Kidney (tissue), 22 donors: ENCODE measurements at regions of chr1 and their contacts with region 1.

Region 1: GRCh38 chr1:205919026-205919746 is 24.1 kb downstream of the SLC26A9 start:
- DNase-seq: peak; percentile 72 to 83 (median 81)
- H3K4me3 ChIP-seq: no peak overlapping the region
- H3K27ac ChIP-seq: no peak overlapping the region
- H3K4me1 ChIP-seq: peaks cover 0 to 21% (median 14%) of the 10 kb centered on the region in 3 donors
- H3K27me3 ChIP-seq: no peaks in the 10 kb centered on the region
- CTCF ChIP-seq: peak; percentile 97

Region 2: DNA sequence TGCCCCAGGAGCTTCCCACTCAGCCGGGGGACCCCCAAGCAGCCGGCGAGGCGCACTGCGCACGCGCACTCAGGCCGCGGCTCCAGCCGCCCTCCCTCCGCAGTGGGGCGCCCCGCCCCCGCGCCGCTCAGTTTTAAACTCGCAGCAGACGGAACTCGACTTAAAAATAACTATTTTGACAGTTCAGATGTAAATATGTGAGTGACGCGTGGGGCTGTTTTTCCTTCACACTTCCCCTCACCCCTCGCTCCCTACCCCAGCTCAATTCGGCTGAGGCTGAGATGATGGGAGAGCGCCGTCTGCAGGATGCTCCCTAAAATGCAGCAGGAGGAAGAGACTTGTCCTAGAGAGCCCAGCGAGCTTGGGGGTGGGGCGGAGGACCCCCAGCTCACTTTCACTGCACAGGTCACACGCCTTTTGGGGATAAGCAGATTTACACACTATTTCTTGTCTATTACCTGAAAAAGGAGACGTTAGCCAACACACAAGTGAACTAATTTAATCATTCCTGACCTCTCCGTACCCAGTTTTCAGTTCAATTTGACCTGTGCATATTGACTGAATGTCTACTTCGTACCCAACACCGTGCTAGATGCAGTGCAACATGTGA is 488.4 kb before region 1 on chr1:
- intact Hi-C with region 1: no loop called
- DNase-seq: peak in 4 of 5 donors; percentile 78 to 87 (median 81)
- H3K4me3 ChIP-seq: peak overlapping the region; percentile 55 to 65 (median 56)
- H3K27ac ChIP-seq: no peak overlapping the region
- H3K4me1 ChIP-seq: peaks cover 0 to 2% (median 0%) of the 10 kb centered on the region in 3 donors
- H3K27me3 ChIP-seq: no peaks in the 10 kb centered on the region
- CTCF ChIP-seq: peak; percentile 58

Region 3: DNA sequence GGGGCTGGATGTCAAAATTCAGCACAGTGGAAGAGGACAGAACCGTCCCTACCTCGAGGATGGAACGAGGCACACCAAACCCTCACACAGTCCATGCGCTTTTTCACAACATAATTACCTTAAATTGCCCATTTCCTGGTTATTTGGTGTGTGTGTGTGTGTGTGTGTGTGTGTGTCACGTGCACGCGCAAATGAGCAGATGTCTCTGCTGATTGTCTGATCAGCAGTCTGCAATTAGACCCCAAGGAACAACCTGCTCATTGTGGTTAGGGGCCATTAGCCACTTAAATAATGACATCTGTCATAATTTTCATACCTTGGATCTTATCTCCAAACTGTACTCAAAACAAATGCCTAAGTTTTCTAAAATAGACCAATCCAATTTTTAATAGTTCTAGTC is 174.8 kb after region 1 on chr1:
- intact Hi-C with region 1: no loop called
- DNase-seq: no peak
- H3K4me3 ChIP-seq: no peak overlapping the region
- H3K27ac ChIP-seq: no peak overlapping the region
- H3K4me1 ChIP-seq: no peaks in the 10 kb centered on the region
- H3K27me3 ChIP-seq: no peaks in the 10 kb centered on the region
- CTCF ChIP-seq: no peak

Region 4: DNA sequence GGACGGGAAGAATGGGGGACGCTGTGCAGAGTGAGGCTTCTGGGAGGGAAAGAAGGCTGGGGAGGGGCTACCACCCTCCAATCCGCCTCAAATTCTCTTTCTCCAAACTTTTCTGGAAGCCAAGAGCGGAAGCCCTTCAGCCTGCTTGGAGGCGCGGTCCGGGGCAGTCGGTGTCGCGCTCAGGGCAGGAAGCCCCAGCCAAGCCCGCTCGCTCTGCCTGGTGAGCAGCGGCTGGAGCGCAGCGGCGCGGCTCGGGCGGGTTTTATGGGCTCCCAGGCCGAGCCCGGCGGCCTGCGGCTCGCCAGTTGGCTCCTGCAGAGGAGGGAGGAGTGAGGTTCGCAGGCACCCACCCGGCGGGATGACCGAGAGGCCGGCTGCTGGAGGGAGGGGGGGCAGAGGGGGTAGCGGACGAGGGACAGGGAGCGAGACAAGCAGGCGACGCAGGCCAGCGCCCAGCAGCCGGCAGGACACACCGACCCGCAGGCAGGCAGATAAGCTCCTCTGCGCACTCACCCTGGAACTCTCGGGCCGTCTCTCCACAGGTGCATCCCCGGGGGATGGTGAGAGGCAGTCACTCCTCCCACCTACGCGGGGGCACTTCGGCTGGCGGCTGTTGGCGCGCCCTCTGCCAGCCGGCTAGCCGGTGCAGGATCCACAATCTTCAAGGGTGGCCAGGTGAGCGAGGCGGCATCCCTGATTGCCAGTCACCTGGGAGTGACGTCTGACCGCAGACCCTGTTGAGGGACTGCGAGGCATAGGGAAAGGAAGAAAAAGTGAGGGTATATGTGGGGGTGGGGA is 198.2 kb after region 1 on chr1 and contains the start of gene AVPR1B:
- intact Hi-C with region 1: loop called (anchors 10 kb)
- DNase-seq: peak; percentile 85 to 93 (median 89)
- H3K4me3 ChIP-seq: peak within 1 kb of the TSS; percentile 37 to 51 (median 38)
- H3K27ac ChIP-seq: no peak within 1 kb of the TSS
- H3K4me1 ChIP-seq: peaks cover 0 to 11% (median 7%) of the 10 kb centered on the region in 3 donors
- H3K27me3 ChIP-seq: no peaks in the 10 kb centered on the region
- CTCF ChIP-seq: no peak
- total RNA-seq, gene AVPR1B: 0.69 TPM